AG04450 (cell line): ENCODE measurements at regions of chr22 and their contacts with region 1.

Region 1: DNA sequence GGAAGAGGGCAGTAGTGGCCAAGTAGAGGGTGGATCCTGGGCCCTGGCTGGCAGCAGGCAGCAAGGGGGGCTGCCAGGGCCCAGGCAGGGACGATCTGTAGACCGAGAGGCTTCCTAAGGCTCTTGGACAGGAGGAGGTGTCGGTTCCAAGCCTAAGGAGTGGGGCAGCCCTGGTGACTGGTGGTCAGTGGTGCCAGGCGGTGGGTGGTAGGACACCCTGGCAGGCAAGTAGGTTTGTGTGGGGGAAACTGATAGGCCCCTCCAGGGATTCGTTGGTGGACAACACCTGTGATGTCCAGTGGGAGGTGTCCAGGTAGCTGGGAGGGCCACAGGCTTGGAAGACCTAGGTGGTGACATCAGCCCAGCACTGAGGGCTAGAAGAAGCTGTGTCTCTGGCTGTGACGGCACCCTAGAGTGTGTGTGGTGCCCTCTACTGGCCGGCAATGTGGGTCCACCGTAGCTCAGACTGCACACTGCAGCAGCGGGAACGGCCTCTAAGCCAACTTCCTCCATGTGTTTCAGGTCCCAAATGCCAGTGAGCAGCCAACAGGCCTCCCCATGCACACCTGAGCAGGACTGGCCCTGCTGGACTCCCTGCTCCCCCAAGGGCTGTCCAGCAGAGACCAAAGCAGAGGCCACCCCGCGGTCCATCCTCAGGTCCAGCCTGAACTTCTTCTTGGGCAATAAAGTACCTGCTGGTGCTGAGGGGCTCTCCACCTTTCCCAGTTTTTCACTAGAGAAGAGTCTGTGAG is 9.4 kb upstream of the SAMM50 start:
- DNase-seq: no peak
- H3K4me3 ChIP-seq: no peak overlapping the region
- H3K27ac ChIP-seq: no peak overlapping the region
- H3K27me3 ChIP-seq: no peaks in the 10 kb centered on the region
- CTCF ChIP-seq: peak; percentile 78

Region 2: DNA sequence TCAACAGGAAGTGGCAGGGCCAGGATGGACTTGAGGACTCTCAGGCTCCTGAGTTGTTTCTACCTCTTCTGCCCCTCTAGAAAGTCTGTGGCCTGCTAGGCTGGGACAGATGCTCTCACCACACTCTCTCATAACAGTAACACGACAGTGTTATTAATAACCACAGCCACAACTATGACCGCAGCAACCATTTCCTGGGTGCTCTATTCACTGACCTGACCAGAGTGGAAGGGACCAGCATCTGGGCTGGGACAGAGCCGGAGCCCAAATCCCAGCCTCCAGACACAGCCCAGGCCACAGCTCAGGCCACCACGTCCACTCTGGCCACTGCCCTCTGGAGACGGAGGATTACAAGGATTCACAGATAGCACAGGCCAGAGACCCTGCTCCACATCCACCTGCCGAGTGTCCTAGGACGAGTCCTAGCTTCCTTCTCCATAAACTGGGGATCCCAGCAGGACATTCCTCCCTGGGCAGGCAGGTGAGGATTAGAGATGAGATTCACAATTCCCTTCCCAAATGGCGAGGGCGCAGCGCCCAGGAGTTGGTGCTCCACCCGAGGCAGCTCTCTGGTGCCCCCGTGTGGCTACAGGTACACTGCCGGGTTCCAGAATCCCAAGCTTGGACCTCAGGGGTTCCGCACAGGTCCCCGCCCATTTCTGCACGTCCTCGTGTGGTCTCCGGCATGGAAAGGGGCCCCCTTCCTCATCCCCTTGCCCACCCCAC is 61.0 kb before region 1 on chr22:
- CTCF ChIA-PET with region 1: interaction called, 19 read pairs
- POLR2A ChIA-PET with region 1: no interaction called
- DNase-seq: no peak
- H3K4me3 ChIP-seq: no peak overlapping the region
- H3K27ac ChIP-seq: no peak overlapping the region
- H3K27me3 ChIP-seq: peaks cover 15% of the 10 kb centered on the region
- CTCF ChIP-seq: peak; percentile 88

Region 3: DNA sequence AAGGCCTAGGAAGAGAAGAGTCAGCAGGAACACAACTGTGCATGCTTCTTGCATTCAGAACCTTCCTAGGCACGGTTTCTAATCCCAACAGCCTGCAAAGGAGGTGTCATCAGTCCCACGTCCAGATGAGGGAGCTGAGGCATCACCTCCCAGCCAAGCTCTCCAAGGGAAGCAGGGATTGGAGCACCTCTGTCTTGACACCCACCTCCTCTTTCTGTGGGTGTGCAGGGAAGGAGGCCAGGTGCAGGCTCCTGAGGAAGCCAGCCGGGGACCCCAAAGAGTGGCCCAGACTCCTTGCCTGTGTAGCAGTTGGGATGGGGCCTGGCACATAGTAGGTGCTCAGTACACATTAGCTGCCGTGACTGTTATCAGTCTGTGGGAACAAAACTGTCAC is 56.0 kb before region 1 on chr22:
- CTCF ChIA-PET with region 1: interaction called, 11 read pairs
- POLR2A ChIA-PET with region 1: no interaction called
- DNase-seq: no peak
- H3K4me3 ChIP-seq: no peak overlapping the region
- H3K27ac ChIP-seq: no peak overlapping the region
- H3K27me3 ChIP-seq: peaks cover 38% of the 10 kb centered on the region
- CTCF ChIP-seq: peak; percentile 29

Region 4: DNA sequence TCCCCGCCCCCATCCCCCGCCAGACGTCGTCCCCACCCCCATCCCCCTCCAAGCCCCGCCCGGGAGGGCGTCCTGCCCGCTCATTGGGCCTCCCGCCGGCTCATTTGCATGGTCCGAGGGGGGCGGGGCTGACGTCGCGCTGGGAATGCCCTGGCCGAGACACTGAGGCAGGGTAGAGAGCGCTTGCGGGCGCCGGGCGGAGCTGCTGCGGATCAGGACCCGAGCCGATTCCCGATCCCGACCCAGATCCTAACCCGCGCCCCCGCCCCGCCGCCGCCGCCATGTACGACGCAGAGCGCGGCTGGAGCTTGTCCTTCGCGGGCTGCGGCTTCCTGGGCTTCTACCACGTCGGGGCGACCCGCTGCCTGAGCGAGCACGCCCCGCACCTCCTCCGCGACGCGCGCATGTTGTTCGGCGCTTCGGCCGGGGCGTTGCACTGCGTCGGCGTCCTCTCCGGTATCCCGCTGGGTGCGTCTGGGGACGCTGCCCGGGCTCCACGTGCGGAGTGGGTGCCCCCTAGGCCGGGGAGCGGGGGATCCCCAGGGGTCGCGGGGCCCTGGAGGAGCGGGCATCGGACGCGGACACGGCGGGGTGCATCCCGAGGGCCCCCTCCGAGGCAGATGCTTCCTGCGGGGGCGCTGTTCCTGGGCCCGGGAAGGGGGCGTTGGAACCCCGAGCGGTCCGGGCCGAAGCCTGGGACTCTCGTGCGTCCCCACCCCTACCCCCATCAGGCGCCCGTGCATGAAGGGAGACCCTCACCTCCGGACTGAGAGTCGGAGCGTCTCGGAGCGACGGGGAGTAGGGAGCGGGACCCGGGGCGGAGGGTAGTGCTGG is 22.0 kb before region 1 on chr22 and contains the start of gene PNPLA3:
- CTCF ChIA-PET with region 1: interaction called, 13 read pairs
- POLR2A ChIA-PET with region 1: interaction called, 3 read pairs
- DNase-seq: peak; percentile 50
- H3K4me3 ChIP-seq: peak within 1 kb of the TSS; percentile 64
- H3K27ac ChIP-seq: peak within 1 kb of the TSS; percentile 11
- H3K27me3 ChIP-seq: no peaks in the 10 kb centered on the region
- CTCF ChIP-seq: peak; percentile 32
- polyA plus RNA-seq, gene PNPLA3: 3.9 and 4.0 TPM in 2 replicates

Region 5: DNA sequence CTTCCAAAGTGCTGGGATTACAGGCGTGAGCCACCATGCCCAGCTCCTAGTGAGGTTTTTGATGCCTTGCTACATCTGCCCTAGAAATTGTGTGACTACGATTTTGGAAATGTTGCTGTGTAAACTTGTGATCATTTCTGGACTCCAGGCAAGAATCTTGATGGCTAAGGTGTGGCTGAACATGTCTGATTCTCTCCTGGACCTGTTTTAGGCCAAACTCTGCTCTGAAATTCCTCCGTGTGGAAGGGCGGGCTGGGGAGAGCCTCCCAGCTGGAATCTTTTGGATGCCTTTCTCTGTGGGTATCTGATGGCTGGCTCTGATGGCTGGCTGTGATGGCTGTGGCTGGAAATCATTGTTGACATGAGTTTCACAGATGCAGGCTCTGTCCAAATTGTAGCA is 14.0 kb before region 1 on chr22:
- CTCF ChIA-PET with region 1: interaction called, 12 read pairs
- POLR2A ChIA-PET with region 1: no interaction called
- DNase-seq: no peak
- H3K4me3 ChIP-seq: no peak overlapping the region
- H3K27ac ChIP-seq: no peak overlapping the region
- H3K27me3 ChIP-seq: no peaks in the 10 kb centered on the region
- CTCF ChIP-seq: no peak